ENCODE measurements at regions of chr4 and their contacts with region 1.

Region 1: DNA sequence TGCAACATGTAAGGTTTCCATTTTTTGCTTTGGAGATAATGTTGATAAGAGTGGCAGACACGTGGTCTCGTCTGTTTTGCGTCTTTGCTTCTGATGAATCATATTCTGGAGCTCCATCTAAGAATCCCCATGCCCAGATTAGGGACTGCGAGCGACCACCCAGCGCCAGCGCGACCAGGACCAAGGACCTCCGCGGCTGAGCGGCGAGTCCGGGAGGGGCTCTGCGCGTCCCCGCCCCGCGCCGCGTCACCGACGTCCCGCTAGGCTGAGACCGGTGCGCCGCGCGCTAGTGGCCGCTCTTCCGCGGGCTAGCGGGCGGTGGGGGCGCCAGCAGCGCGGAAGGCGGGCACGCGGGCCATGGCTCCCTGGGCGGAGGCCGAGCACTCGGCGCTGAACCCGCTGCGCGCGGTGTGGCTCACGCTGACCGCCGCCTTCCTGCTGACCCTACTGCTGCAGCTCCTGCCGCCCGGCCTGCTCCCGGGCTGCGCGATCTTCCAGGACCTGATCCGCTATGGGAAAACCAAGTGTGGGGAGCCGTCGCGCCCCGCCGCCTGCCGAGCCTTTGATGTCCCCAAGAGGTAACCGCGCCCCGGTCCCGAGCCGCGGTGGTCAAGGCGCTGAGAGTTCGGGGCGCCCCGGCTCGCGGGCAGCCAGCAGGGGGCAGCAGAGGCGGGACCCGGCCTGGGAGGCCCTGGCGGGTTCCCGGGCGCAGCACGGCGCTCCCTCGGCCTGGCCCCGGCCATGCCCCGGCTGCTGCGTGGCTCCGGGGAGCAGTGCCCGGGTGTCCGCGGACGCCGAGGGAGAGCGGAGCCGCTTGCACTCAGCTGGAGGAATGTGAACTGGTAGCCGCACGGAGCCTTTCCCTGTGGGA is at the start of gene SRD5A3:
- DNase-seq: peak; percentile 85
- H3K4me3 Mint-ChIP-seq: peak within 1 kb of the TSS; percentile 82
- H3K27ac Mint-ChIP-seq: peak within 1 kb of the TSS; percentile 84
- H3K4me1 Mint-ChIP-seq: peaks cover 28% of the 10 kb centered on the region
- H3K27me3 Mint-ChIP-seq: no peaks in the 10 kb centered on the region
- total RNA-seq, gene SRD5A3: 19.2 to 19.7 TPM

Region 2: DNA sequence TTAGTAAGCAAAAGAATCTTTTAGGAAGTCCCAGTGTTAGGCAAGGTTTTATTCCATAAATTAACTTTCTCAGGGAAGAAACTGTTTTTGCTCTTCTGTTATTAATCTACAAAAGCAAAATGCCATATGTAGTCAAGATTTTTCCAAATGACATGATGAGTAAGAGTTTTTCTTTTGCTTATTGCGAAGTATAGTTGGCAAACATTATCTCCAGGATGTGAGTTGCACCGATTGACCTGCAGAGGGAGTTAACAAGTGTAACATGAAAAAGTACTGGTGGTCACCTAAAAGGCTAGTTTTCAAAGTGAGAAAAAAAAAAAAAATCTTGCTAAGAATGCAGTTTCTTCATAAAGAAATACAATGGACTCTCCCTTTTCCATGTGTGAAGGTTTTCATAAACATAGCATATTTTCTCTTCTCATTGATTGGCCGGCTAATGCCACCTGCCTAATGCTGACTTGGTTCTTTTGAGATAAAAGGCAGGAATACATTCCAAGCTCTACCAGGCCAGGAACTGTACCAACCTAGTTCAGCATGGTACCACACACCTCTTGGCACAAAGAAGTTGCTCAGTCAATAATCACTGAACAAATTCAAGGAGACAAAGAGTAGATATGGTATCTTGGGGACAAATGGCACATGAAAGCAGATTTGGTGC is 1855.1 kb before region 1 on chr4:
- CTCF ChIA-PET with region 1: no interaction called
- POLR2A ChIA-PET with region 1: no interaction called
- intact Hi-C with region 1: no loop called
- DNase-seq: no peak
- H3K4me3 Mint-ChIP-seq: no peak overlapping the region
- H3K27ac Mint-ChIP-seq: no peak overlapping the region
- H3K4me1 Mint-ChIP-seq: no peaks in the 10 kb centered on the region
- H3K27me3 Mint-ChIP-seq: peaks cover 6% of the 10 kb centered on the region

Region 3: GRCh38 chr4:54658252-54659093 is 687.7 kb before region 1 on chr4:
- CTCF ChIA-PET with region 1: no interaction called
- POLR2A ChIA-PET with region 1: no interaction called
- intact Hi-C with region 1: no loop called
- DNase-seq: peak; percentile 45
- H3K4me3 Mint-ChIP-seq: peak overlapping the region; percentile 68
- H3K27ac Mint-ChIP-seq: no peak overlapping the region
- H3K4me1 Mint-ChIP-seq: peaks cover 11% of the 10 kb centered on the region
- H3K27me3 Mint-ChIP-seq: peaks cover 61% of the 10 kb centered on the region

Region 4: DNA sequence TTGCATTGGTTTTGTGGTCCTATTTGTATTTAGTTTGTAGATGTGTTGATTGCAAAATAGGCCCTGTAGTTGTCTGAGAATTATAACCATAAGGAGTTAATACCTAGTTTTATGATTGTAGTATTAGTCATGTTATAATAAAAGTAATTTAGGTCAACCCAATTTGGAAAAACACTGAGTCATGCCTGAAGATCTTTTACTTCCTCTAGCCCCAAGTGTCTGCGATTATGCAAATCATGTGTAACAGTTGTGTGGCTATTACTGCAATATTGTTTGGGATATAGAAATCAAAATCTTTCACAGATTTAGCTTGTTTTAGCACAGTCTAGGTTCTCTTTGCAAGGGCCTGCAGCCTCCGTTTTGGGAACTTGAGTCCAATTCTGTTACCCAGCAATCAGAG is 12.5 kb after region 1 on chr4:
- CTCF ChIA-PET with region 1: interaction called, 18 read pairs
- POLR2A ChIA-PET with region 1: no interaction called
- intact Hi-C with region 1: no loop called
- DNase-seq: no peak
- H3K4me3 Mint-ChIP-seq: no peak overlapping the region
- H3K27ac Mint-ChIP-seq: no peak overlapping the region
- H3K4me1 Mint-ChIP-seq: peaks cover 15% of the 10 kb centered on the region
- H3K27me3 Mint-ChIP-seq: no peaks in the 10 kb centered on the region

Region 5: DNA sequence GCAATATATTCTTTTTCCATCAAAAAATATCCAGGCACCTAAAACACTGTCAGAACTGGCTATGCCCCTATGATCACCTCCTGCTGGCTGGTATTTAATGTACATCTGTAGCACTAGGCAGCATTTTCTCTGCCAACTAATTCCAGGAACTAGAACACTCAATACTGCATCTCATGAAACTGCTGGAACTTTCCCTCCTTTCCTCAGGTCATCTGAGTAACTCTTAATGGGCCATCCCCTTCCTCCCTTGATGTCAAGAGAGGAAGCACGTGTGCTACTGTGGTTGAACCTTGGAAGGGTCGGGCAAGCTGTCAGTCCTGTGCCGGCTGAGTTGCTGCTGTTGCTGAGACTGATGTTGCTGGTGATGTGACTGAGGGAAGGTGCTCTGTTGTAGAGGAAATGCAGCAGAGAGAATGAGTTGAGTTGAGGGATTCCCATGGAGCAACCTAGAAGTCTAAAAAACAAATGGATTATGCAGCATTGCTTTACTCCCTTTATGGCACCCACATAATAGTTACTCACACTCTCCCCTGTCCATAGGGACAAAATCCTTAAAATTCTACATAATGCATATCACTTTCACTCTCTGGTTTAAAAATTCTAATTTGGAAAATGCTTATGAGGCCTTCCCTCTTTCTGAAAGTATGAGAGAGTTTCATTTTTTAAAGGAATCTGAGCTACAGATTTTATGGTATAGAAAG is 89.1 kb after region 1 on chr4:
- CTCF ChIA-PET with region 1: no interaction called
- POLR2A ChIA-PET with region 1: no interaction called
- intact Hi-C with region 1: loop called (anchors 2 kb)
- DNase-seq: peak; percentile 63
- H3K4me3 Mint-ChIP-seq: no peak overlapping the region
- H3K27ac Mint-ChIP-seq: peak overlapping the region; percentile 35
- H3K4me1 Mint-ChIP-seq: peaks cover 15% of the 10 kb centered on the region
- H3K27me3 Mint-ChIP-seq: no peaks in the 10 kb centered on the region

Region 6: DNA sequence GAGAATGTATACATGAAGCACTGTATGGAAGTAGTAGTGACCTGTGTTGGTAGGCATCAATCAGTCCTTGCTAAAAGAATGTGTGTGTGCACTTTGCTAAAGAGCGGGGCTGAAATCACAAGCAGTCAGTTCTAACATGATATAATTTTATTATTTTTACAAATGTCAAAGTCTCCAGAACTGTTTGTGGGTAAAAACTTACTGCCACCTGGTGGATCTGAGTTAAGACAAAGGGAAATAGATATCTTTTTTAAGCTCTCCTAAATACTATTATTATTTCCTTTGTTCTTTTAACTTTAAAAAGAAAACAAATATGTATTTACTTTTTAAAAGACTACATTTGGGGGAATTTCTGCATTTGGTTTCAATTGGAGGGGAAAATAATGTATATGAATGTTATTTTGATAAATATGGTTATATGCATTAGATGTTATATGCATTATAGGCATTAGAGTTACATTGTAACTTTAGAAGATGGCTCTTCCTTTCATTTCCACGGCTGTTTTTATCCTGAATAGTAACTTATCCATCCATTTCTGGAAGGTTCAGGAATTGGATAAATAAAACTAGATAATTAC is 208.3 kb after region 1 on chr4:
- CTCF ChIA-PET with region 1: interaction called, 11 read pairs
- POLR2A ChIA-PET with region 1: no interaction called
- intact Hi-C with region 1: loop called (anchors 1 kb)
- DNase-seq: no peak
- H3K4me3 Mint-ChIP-seq: no peak overlapping the region
- H3K27ac Mint-ChIP-seq: no peak overlapping the region
- H3K4me1 Mint-ChIP-seq: peaks cover 10% of the 10 kb centered on the region
- H3K27me3 Mint-ChIP-seq: peaks cover 5% of the 10 kb centered on the region

Region 7: GRCh38 chr4:55866973-55867574 is 520.9 kb after region 1 on chr4:
- CTCF ChIA-PET with region 1: interaction called, 4 read pairs
- POLR2A ChIA-PET with region 1: no interaction called
- intact Hi-C with region 1: loop called (anchors 1 kb)
- DNase-seq: peak; percentile 33
- H3K4me3 Mint-ChIP-seq: no peak overlapping the region
- H3K27ac Mint-ChIP-seq: peak overlapping the region; percentile 46
- H3K4me1 Mint-ChIP-seq: peaks cover 21% of the 10 kb centered on the region
- H3K27me3 Mint-ChIP-seq: no peaks in the 10 kb centered on the region

Measured in activated CD4-positive, alpha-beta memory T cell treated with anti-CD3 and anti-CD28 coated beads for 36 hours (primary cell).